GM12878 (cell line): ENCODE measurements at regions of chr2 and their contacts with region 1.

Region 1: GRCh38 chr2:75292826-75293225 is 93.5 kb upstream of the TACR1 start:
- DNase-seq: no peak
- ATAC-seq: no peak
- H3K4me3 ChIP-seq: no peak overlapping the region
- H3K27ac ChIP-seq: no peak overlapping the region
- H3K4me1 ChIP-seq: peaks cover 8% of the 10 kb centered on the region
- H3K27me3 ChIP-seq: no peaks in the 10 kb centered on the region
- CTCF ChIP-seq: no peak
- EP300 ChIP-seq: no peak
- POLR2A ChIP-seq: no peak
- RAD21 ChIP-seq: no peak

Region 2: GRCh38 chr2:74735544-74735943 is 557.3 kb before region 1 on chr2:
- CTCF ChIA-PET with region 1: no interaction called
- POLR2A ChIA-PET with region 1: interaction called, 10 read pairs
- RAD21 ChIA-PET with region 1: no interaction called
- SMC1A ChIA-PET with region 1: no interaction called
- in situ Hi-C with region 1: no loop called
- intact Hi-C with region 1: no loop called
- DNase-seq: no peak
- ATAC-seq: no peak
- H3K4me3 ChIP-seq: no peak overlapping the region
- H3K27ac ChIP-seq: no peak overlapping the region
- H3K4me1 ChIP-seq: no peaks in the 10 kb centered on the region
- H3K27me3 ChIP-seq: no peaks in the 10 kb centered on the region
- CTCF ChIP-seq: no peak
- EP300 ChIP-seq: no peak
- POLR2A ChIP-seq: no peak
- RAD21 ChIP-seq: no peak

Region 3: DNA sequence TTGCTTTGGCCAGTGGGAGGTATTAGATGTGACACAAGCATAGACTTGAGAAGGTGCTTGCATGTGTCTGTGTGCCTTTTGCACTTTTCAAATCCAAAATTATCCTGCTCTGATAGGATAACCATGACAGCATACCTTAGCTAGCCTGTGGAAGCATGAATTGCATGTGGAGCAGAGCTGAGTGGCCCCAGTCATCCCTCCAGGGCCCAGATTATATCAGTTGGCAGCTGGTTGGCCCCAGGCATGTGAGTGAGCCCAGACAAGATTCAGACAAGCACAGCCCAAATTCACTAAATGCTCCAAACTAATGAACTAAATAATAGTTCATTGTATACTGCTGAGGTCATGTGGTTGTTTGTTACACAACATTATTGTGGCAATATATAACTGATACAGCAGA is 112.3 kb before region 1 on chr2:
- CTCF ChIA-PET with region 1: no interaction called
- POLR2A ChIA-PET with region 1: no interaction called
- RAD21 ChIA-PET with region 1: no interaction called
- SMC1A ChIA-PET with region 1: no interaction called
- in situ Hi-C with region 1: no loop called
- intact Hi-C with region 1: no loop called
- DNase-seq: no peak
- ATAC-seq: no peak
- H3K4me3 ChIP-seq: no peak overlapping the region
- H3K27ac ChIP-seq: no peak overlapping the region
- H3K4me1 ChIP-seq: no peaks in the 10 kb centered on the region
- H3K27me3 ChIP-seq: no peaks in the 10 kb centered on the region
- CTCF ChIP-seq: no peak
- EP300 ChIP-seq: no peak
- POLR2A ChIP-seq: no peak
- RAD21 ChIP-seq: no peak